WTC11 (cell line): ENCODE measurements at regions of chr12 and their contacts with region 1.

Region 1: GRCh38 chr12:51814311-51815088 is 34.0 kb downstream of the FIGNL2 start:
- DNase-seq: peak; percentile 76
- ATAC-seq: peak; percentile 63
- H3K4me3 Mint-ChIP-seq: peak overlapping the region; percentile 66
- H3K27ac Mint-ChIP-seq: no peak overlapping the region
- H3K4me1 Mint-ChIP-seq: peaks cover 15% of the 10 kb centered on the region
- H3K27me3 Mint-ChIP-seq: peaks cover 60% of the 10 kb centered on the region
- CTCF ChIP-seq: 0 out of 2 replicates have a peak, but pooled peaks have one; percentile 15

Region 2: GRCh38 chr12:51419425-51420208 is 394.9 kb before region 1 on chr12:
- CTCF ChIA-PET with region 1: interaction called, 15 read pairs
- POLR2A ChIA-PET with region 1: no interaction called
- DNase-seq: no peak
- ATAC-seq: peak; percentile 52
- H3K4me3 Mint-ChIP-seq: peak overlapping the region; percentile 44
- H3K27ac Mint-ChIP-seq: peak overlapping the region; percentile 73
- H3K4me1 Mint-ChIP-seq: peaks cover 45% of the 10 kb centered on the region
- H3K27me3 Mint-ChIP-seq: no peaks in the 10 kb centered on the region
- CTCF ChIP-seq: no peak

Region 3: GRCh38 chr12:51496895-51497294 is 317.6 kb before region 1 on chr12:
- CTCF ChIA-PET with region 1: no interaction called
- POLR2A ChIA-PET with region 1: no interaction called
- DNase-seq: no peak
- ATAC-seq: no peak
- H3K4me3 Mint-ChIP-seq: no peak overlapping the region
- H3K27ac Mint-ChIP-seq: no peak overlapping the region
- H3K4me1 Mint-ChIP-seq: no peaks in the 10 kb centered on the region
- H3K27me3 Mint-ChIP-seq: no peaks in the 10 kb centered on the region
- CTCF ChIP-seq: no peak

Region 4: DNA sequence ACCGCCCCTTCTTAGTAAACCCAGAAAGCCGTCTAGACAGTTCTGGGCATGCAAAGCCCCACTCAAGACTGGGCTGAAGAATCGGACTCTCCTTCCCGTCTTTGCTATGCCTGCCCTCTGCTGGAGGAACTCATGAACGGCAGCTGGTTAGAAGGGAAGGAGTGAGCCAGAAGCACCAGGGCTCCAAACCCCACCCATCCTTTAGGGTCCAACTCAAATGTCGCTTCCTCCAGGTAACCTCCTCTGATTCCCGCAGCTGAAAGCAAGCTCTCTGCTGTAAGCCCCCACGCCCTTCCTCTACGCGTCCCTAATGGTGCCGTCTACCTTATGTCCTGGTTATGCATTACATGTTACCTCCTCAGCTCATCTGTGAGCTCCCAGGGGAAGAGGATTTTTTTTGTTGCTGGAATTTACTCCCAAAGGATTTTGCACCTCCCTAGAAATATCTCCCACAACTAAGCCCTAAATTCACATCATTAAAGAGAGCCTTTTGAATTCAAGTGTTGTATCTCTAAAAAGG is 282.5 kb before region 1 on chr12:
- CTCF ChIA-PET with region 1: interaction called, 13 read pairs
- POLR2A ChIA-PET with region 1: no interaction called
- DNase-seq: peak; percentile 92
- ATAC-seq: peak; percentile 93
- H3K4me3 Mint-ChIP-seq: peak overlapping the region; percentile 44
- H3K27ac Mint-ChIP-seq: no peak overlapping the region
- H3K4me1 Mint-ChIP-seq: peaks cover 30% of the 10 kb centered on the region
- H3K27me3 Mint-ChIP-seq: no peaks in the 10 kb centered on the region
- CTCF ChIP-seq: peak; percentile 88

Region 5: DNA sequence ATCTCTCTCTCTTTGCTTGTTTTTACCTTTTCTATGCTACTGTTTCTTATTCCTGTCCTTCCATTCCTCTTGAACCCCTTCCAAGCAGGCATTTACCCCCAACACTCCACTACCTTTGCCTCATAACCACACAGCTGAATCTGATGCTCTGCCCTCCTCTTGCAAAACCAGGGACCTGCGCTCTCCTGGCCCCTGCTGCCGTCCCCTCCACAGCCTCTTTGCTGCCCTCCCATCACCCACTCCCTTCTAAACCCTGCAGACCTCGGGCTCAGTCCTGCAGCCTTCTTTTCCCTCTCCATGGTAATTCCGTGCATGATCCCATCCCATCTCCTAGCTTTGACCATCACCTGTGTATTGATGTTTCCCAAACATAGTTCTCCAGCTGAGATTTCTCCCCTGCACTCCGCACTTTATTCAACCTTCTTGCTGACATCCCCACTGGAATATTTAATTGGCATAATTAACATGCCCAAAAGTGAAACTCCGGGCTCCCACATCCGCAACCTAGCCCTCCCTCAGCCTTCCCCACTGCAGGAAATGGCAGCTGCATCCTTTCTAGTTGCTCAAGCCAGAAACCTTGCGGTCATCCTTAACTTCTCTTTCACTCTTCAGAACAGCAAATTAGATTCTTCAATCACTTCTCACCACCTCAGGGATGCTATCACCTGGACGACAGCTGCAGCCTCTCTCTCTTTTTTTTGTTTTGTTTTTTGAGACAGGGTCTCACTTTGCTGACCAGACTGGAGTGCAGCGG is 18.0 kb after region 1 on chr12:
- CTCF ChIA-PET with region 1: interaction called, 18 read pairs
- POLR2A ChIA-PET with region 1: no interaction called
- DNase-seq: no peak
- ATAC-seq: no peak
- H3K4me3 Mint-ChIP-seq: no peak overlapping the region
- H3K27ac Mint-ChIP-seq: no peak overlapping the region
- H3K4me1 Mint-ChIP-seq: peaks cover 76% of the 10 kb centered on the region
- H3K27me3 Mint-ChIP-seq: peaks cover 4% of the 10 kb centered on the region; the same call in 1 of the 2 replicates
- CTCF ChIP-seq: no peak

Region 6: GRCh38 chr12:51886021-51886322 is 71.5 kb after region 1 on chr12:
- CTCF ChIA-PET with region 1: interaction called, 57 read pairs
- POLR2A ChIA-PET with region 1: no interaction called
- DNase-seq: no peak
- ATAC-seq: no peak
- H3K4me3 Mint-ChIP-seq: no peak overlapping the region
- H3K27ac Mint-ChIP-seq: no peak overlapping the region
- H3K4me1 Mint-ChIP-seq: peaks cover 25% of the 10 kb centered on the region
- H3K27me3 Mint-ChIP-seq: peaks cover 16% of the 10 kb centered on the region
- CTCF ChIP-seq: no peak